Right ventricle myocardium inferior (tissue), 1 donor: ENCODE measurements at regions of chr3 and their contacts with region 1.

Region 1: GRCh38 chr3:71064288-71064955 is 519.1 kb downstream of the FOXP1 start:
- DNase-seq: peak; percentile 72
- ATAC-seq: peak; percentile 30

Region 2: DNA sequence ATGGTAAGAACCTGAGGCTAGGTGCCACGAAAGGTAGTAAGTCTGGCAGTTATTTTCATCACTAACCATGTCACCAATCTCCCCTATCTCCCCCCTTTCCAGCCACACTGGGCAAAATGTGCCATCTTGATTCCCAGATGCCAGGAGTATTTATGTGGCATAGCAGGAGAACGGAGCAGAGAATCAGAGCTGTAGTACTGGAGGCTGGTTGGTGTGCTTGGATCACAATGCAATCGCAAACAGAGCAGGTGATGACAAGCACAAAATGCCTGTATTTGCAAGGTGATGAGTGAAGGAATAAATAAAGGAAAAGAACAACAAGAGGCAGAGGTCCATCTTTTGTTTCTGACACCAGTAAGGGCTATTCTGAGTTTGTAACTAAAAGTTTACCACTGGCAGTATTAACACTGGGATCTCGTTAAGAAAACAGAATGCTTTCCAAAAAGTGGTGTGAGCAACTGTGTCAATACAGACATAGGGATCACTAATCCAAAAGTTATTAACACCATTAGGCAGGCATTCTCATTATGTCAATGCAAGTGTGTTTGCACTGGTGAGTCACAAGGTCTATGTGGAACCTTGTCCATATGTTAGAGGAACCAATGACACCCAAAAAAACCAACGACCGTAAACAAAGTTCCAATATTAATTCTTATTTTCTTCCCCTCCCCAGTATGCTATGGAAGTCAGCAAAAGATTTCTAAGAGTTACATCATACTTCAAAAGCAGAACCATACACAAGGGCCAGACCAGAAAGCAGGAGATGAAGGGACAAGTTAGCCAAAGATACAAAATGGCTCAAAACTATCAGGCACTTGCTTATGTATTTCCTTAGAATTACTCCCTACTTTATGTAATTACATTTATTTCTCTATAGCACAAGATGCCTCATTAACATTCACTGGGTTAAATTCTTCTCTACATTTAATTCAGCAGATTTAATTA is 37.5 kb before region 1 on chr3:
- intact Hi-C with region 1: loop called (anchors 5 kb)
- DNase-seq: no peak
- ATAC-seq: peak; percentile 65